ENCODE measurements at regions of chr15 and their contacts with region 1.

Region 1: GRCh38 chr15:39730552-39730951 is 52.1 kb downstream of the FSIP1 start:
- DNase-seq: no peak
- ATAC-seq: no peak

Region 2: GRCh38 chr15:38193496-38193895 is 1537.1 kb before region 1 on chr15:
- intact Hi-C with region 1: loop called (anchors 5 kb)
- DNase-seq: no peak
- ATAC-seq: no peak

Measured in sciatic nerve (tissue), 2 donors.